ENCODE measurements at regions of chr17 and their contacts with region 1.

Region 1: DNA sequence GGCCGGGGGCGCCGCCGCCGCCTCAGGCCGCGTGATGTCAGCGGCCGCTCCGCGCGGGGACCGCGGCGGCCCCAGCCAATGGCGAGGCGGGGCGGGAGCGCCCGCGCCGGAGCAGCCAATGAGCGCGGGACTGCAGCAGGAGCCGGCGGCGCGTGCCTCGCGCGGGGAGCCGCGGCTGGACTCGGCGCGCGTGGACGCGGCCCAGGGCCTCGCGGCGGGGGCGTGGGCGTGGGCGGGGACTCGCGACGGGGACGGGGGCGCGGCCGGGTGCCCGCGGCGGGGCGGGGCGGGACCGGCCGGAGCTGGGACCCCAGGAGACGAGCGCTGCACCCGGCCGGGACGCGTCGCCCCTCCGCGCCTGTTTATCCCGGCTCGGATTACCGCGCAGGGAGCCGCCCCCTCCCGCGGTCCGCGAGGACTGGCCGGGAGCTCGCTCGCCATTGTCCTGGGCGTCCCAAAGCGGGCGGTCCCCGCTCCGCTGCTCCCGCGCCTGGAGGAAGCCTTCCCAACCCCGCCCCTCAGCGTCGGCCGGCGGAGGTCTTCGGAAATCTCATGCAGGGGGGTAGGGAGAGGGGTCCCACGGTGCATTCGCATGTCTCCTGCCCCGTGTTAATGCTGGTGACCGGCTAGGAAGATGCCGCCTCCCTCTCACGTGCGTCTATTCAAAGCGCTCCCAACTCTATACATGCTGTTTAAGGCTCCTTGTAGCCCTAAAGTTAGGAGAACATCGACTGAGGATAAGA is at the start of gene RNF157:
- DNase-seq: peak; percentile 78 to 94 (median 92)
- ATAC-seq: peak; percentile 75
- H3K4me3 ChIP-seq: peak within 1 kb of the TSS; percentile 62
- H3K27ac ChIP-seq: peak within 1 kb of the TSS; percentile 91
- H3K4me1 ChIP-seq: peaks cover 25 to 33% of the 10 kb centered on the region in 2 experiments; a peak in 4 of 5 replicates
- H3K27me3 ChIP-seq: no peaks in the 10 kb centered on the region
- CTCF ChIP-seq: no peak
- EP300 ChIP-seq: no peak
- POLR2A ChIP-seq: peak; percentile 79
- RAD21 ChIP-seq: peak in 1 of 2 experiments; percentile 4; a peak in 1 of 4 replicates
- polyA plus RNA-seq, gene RNF157: 8.1 to 12.7 TPM

Region 2: GRCh38 chr17:76182016-76182764 is 58.4 kb before region 1 on chr17:
- CTCF ChIA-PET with region 1: no interaction called
- POLR2A ChIA-PET with region 1: interaction called, 3 read pairs
- in situ Hi-C with region 1: no loop called
- intact Hi-C with region 1: loop called (anchors 5 kb)
- DNase-seq: peak; percentile 81 to 91 (median 84)
- ATAC-seq: peak; percentile 88
- H3K4me3 ChIP-seq: no peak overlapping the region
- H3K27ac ChIP-seq: no peak overlapping the region
- H3K4me1 ChIP-seq: peaks cover 7 to 27% of the 10 kb centered on the region in 2 experiments; a peak in 3 of 5 replicates
- H3K27me3 ChIP-seq: no peaks in the 10 kb centered on the region
- CTCF ChIP-seq: peak; percentile 80 to 93 (median 86)
- EP300 ChIP-seq: no peak
- POLR2A ChIP-seq: no peak
- RAD21 ChIP-seq: peak; percentile 63 to 83

Region 3: DNA sequence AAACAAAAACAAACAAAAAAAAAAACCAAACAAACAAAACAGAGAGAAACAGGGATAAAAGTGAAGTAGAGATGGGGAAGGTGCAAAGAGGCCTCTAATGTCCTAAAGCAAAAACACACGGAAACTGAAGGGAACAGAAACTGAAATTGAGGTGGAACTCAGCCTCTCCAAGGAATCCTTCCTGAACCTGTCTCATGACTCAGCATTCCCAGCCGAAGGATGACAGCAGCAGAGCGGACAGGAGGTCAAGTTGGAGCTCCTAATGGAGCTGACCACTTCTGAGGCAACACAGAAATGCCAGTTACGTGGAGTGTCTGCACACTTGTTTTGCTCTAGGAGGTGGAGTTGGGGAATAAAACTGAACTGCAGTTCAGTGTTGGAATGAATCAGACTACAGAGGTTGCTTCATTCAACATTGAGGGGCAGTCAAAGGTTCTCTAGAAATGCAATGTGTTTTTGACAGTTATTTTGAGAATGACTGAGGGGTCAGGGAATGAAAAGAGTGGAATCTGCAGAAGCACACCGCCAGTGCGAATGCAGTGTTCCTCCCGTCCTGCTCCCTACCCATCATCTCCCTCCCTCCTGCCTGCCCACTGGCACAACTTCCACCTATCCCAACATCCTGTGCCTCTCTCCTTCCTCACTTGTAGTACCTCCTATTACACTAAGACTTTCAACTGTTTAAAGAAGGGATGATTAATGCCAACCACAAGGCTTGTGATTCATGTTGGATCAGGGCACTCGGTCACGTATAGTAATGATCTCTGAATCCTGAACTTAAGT is 206.0 kb after region 1 on chr17:
- CTCF ChIA-PET with region 1: no interaction called
- POLR2A ChIA-PET with region 1: no interaction called
- in situ Hi-C with region 1: no loop called
- intact Hi-C with region 1: no loop called
- DNase-seq: peak; percentile 44 to 74 (median 56)
- ATAC-seq: peak; percentile 37
- H3K4me3 ChIP-seq: no peak overlapping the region
- H3K27ac ChIP-seq: peak overlapping the region; percentile 46
- H3K4me1 ChIP-seq: peaks cover 53 to 66% of the 10 kb centered on the region in 2 experiments
- H3K27me3 ChIP-seq: no peaks in the 10 kb centered on the region
- CTCF ChIP-seq: no peak
- EP300 ChIP-seq: no peak
- POLR2A ChIP-seq: no peak
- RAD21 ChIP-seq: no peak